ENCODE measurements at regions of chr10 and their contacts with region 1.

Region 1: DNA sequence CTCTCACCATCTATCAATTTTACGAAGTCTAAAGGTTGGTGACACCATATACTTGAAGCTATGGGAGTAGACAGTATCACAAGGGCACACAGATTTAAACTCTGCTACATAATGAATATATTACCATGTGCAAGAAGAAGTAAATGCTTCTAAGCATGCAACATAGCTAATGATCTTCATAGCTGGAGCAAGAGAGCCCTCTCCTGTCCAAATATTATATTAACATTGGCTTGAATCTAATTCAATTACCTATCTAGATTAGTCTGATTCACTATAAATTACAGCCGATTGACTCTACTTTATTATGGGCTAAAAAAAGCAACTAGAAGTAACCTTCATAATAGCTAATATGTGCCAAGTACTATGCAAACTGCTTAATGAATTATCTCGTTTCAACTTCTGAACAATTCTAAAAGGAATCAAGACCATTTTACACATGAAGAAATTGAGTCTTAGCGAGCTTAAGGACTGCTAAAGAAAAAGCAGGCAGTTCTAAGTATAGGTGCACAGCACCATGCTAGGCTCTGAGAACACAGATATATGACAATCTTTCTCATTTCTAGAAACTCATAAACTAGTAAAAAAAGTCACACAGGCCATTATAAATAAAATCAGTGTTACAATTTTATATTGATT is 21.9 kb downstream of the FRA10AC1 start:
- DNase-seq: no peak
- ATAC-seq: no peak
- H3K4me3 ChIP-seq: no peak overlapping the region
- H3K27ac ChIP-seq: no peak overlapping the region
- H3K4me1 ChIP-seq: no peaks in the 10 kb centered on the region
- H3K27me3 ChIP-seq: no peaks in the 10 kb centered on the region

Region 2: GRCh38 chr10:93267521-93267920 is 413.0 kb before region 1 on chr10:
- intact Hi-C with region 1: no loop called
- DNase-seq: no peak
- ATAC-seq: no peak
- H3K4me3 ChIP-seq: no peak overlapping the region
- H3K27ac ChIP-seq: no peak overlapping the region
- H3K4me1 ChIP-seq: no peaks in the 10 kb centered on the region
- H3K27me3 ChIP-seq: no peaks in the 10 kb centered on the region

Region 3: GRCh38 chr10:93346694-93347093 is 333.8 kb before region 1 on chr10:
- intact Hi-C with region 1: loop called in 1 of 2 experiments (anchors 10 kb)
- DNase-seq: no peak
- ATAC-seq: no peak
- H3K4me3 ChIP-seq: no peak overlapping the region
- H3K27ac ChIP-seq: no peak overlapping the region
- H3K4me1 ChIP-seq: no peaks in the 10 kb centered on the region
- H3K27me3 ChIP-seq: no peaks in the 10 kb centered on the region

Region 4: DNA sequence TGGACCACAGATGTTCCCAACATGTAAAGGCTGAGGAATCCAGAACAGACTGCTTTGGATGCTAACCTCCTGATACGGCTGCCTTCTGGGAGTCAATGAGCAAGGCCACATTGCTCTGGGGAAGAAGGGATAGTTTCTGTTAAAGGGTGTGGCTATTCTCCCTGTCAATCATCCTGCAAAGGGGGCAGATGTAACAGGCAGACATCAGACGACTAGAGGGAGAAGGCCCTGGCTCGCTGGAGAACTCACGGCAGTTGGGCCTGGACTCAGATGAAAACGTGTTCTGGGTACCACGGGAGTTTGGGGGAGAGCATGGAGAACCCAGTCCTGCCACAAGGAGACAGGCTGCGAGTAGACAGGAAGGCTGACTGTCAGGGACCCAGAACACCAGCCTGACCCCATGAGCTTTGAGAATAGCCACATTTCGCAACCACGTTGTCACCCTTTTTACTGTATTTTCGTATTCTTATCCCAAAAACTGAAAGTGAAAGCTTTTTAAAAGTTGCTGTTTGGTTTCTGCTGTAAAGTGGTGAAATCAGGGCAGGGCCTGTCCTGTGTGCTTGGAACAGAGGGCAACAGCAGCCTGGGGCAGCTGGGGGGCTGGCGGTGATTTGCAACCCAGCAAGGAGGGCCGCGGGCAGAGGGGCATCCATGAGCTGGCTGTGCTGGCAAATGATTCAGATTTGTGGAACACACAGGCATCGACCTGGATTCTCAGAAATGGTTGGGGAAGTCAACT is 293.7 kb before region 1 on chr10:
- intact Hi-C with region 1: no loop called
- DNase-seq: no peak
- ATAC-seq: no peak
- H3K4me3 ChIP-seq: no peak overlapping the region
- H3K27ac ChIP-seq: no peak overlapping the region
- H3K4me1 ChIP-seq: peaks cover 6% of the 10 kb centered on the region in 2 donors
- H3K27me3 ChIP-seq: no peaks in the 10 kb centered on the region

Region 5: DNA sequence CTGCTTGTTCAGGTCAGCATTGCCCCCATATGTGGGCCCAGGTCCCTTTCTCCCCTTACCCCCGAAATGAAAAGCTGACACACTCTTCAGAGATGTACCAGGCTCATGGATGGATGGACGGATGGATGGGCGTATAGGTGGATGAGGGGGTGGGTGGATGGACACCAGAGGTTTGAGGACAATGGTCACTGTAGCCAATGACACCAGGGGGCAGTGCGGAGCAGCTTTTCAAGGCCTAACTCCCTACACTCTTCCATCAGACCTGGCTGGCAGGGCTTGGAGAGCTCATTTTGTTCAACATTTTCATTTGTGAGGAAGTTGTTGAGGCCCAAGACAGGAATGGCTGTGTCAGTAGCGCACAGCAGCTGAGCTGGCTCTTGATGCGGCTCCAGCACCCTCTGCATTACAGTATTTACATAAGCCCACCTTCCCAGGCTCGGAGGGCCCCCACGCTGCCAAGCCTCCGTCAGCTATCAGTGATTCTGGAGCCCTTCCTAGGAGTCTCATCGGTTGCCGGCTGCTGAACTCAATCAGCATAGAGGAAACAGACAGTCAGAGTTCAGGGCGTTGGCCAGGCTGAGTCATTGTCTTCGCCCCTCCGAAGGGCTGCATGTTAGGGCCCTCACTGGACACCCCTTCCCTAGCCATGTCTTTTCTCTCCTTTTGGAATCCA is 125.6 kb before region 1 on chr10:
- intact Hi-C with region 1: loop called (anchors 2 to 5 kb)
- DNase-seq: peak; percentile 88 to 93
- ATAC-seq: peak; percentile 84
- H3K4me3 ChIP-seq: no peak overlapping the region
- H3K27ac ChIP-seq: no peak overlapping the region
- H3K4me1 ChIP-seq: no peaks in the 10 kb centered on the region
- H3K27me3 ChIP-seq: no peaks in the 10 kb centered on the region